Naive thymus-derived CD4-positive, alpha-beta T cell (primary cell): ENCODE measurements at regions of chr7 and their contacts with region 1.

Region 1: GRCh38 chr7:131188367-131189339 is 139.0 kb upstream of the MKLN1 start:
- DNase-seq: peak; percentile 5 to 62 (median 29)
- ATAC-seq: peak; percentile 95
- H3K4me3 ChIP-seq: no peak overlapping the region
- H3K4me3 Mint-ChIP-seq: peak overlapping the region in 2 of 10 donors; percentile 27 to 56
- H3K27ac ChIP-seq: no peak overlapping the region
- H3K27ac Mint-ChIP-seq: peak overlapping the region in 4 of 9 donors; percentile 15 to 86 (median 52)
- H3K4me1 ChIP-seq: peaks cover 15 to 28% of the 10 kb centered on the region in 2 donors
- H3K4me1 Mint-ChIP-seq: peaks cover 5 to 51% (median 16%) of the 10 kb centered on the region in 7 donors
- H3K27me3 ChIP-seq: no peaks in the 10 kb centered on the region
- H3K27me3 Mint-ChIP-seq: no peaks in the 10 kb centered on the region

Region 2: DNA sequence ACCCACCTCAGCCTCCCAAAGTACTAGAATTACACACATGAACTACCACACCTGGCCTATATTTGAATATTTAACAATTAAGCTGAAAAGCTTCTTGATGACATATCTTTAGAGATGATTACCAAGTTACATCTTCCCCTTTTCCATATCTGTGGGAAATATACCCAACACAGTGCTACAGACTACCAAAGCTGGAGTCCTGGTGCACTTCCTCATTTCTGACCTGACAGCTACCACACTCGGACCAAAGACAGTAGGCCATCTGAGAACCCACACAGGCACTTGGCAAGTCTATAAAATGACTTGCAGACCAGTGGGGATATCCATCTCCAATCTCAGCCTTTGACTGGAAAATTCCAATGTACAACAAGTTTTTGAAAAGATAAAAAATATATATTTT is 184.3 kb before region 1 on chr7:
- CTCF ChIA-PET with region 1: no interaction called
- POLR2A ChIA-PET with region 1: no interaction called
- intact Hi-C with region 1: no loop called
- DNase-seq: no peak
- ATAC-seq: peak; percentile 46
- H3K4me3 ChIP-seq: no peak overlapping the region
- H3K4me3 Mint-ChIP-seq: peak overlapping the region in 2 of 10 donors; percentile 12 to 32
- H3K27ac ChIP-seq: no peak overlapping the region
- H3K27ac Mint-ChIP-seq: peak overlapping the region in 3 of 9 donors; percentile 23 to 42 (median 27)
- H3K4me1 ChIP-seq: peaks cover 37 to 45% of the 10 kb centered on the region in 2 donors
- H3K4me1 Mint-ChIP-seq: peaks cover 37 to 89% (median 78%) of the 10 kb centered on the region in 7 donors
- H3K27me3 ChIP-seq: no peaks in the 10 kb centered on the region
- H3K27me3 Mint-ChIP-seq: no peaks in the 10 kb centered on the region

Region 3: GRCh38 chr7:131057015-131057793 is 131.4 kb before region 1 on chr7:
- CTCF ChIA-PET with region 1: no interaction called
- POLR2A ChIA-PET with region 1: no interaction called
- intact Hi-C with region 1: loop called in 1 of 2 experiments (anchors 2 kb)
- DNase-seq: peak in 7 of 9 donors; percentile 56 to 82 (median 76)
- ATAC-seq: peak; percentile 67
- H3K4me3 ChIP-seq: peak overlapping the region; percentile 11
- H3K4me3 Mint-ChIP-seq: peak overlapping the region; percentile 72 to 93 (median 82)
- H3K27ac ChIP-seq: peak overlapping the region; percentile 76
- H3K27ac Mint-ChIP-seq: peak overlapping the region; percentile 94 to 100 (median 98)
- H3K4me1 ChIP-seq: peaks cover 69 to 77% of the 10 kb centered on the region in 2 donors
- H3K4me1 Mint-ChIP-seq: peaks cover 54 to 87% (median 72%) of the 10 kb centered on the region in 7 donors
- H3K27me3 ChIP-seq: no peaks in the 10 kb centered on the region
- H3K27me3 Mint-ChIP-seq: no peaks in the 10 kb centered on the region

Region 4: DNA sequence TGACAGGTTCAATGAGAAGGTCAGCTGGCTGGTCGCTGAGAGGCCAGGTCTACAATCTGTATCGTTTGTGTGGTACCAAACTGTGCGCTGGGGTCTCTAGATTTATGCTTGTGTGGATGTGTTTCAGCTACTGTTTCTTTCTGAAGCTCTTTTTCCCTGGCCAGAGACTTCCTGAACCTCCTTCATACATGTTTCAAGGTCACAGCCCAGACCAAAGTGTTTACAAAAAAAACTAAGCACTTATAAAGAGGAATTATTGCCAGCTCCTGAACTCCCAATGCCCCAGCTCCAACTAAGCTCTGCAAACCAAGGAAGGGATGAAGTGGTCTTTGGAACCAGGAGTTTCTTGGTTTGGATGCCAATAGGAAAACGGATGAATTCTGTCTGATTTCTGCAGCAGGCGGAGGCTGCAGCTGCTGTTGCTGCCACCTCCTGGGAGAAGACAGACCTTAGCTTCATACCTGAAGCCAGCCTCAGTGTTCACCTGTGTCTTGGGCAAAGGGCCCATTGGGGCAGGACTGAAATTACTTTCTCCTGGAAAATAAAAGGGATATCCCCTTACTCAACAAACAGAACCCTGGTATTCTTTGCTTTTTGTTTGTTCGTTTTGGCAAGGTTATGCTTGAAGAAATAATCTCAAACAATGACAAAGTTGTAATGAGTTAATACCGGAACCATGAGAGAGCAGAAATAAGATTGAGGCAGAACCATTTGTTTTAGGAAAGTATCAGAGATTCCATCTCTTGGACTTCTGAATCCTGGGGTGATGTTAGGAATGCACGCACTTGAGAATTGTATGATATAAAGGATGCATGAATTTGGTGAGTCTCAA is 114.4 kb after region 1 on chr7:
- CTCF ChIA-PET with region 1: no interaction called
- POLR2A ChIA-PET with region 1: no interaction called
- intact Hi-C with region 1: loop called in 1 of 2 experiments (anchors 2 kb)
- DNase-seq: peak in 6 of 9 donors; percentile 16 to 34 (median 24)
- ATAC-seq: peak; percentile 45
- H3K4me3 ChIP-seq: no peak overlapping the region
- H3K4me3 Mint-ChIP-seq: no peak overlapping the region
- H3K27ac ChIP-seq: no peak overlapping the region
- H3K27ac Mint-ChIP-seq: peak overlapping the region in 1 of 9 donors; percentile 68
- H3K4me1 ChIP-seq: no peaks in the 10 kb centered on the region
- H3K4me1 Mint-ChIP-seq: no peaks in the 10 kb centered on the region
- H3K27me3 ChIP-seq: no peaks in the 10 kb centered on the region
- H3K27me3 Mint-ChIP-seq: peaks cover 0 to 4% (median 0%) of the 10 kb centered on the region in 5 donors

Region 5: GRCh38 chr7:131327626-131328376 is 139.1 kb after region 1 on chr7 and contains the start of gene MKLN1:
- CTCF ChIA-PET with region 1: no interaction called
- POLR2A ChIA-PET with region 1: no interaction called
- intact Hi-C with region 1: loop called in 1 of 2 experiments (anchors 2 kb)
- DNase-seq: peak; percentile 82 to 91 (median 86)
- ATAC-seq: peak; percentile 99
- H3K4me3 ChIP-seq: peak within 1 kb of the TSS; percentile 88
- H3K4me3 Mint-ChIP-seq: peak within 1 kb of the TSS; percentile 88 to 100 (median 94)
- H3K27ac ChIP-seq: peak within 1 kb of the TSS; percentile 94
- H3K27ac Mint-ChIP-seq: peak within 1 kb of the TSS; percentile 86 to 99 (median 97)
- H3K4me1 ChIP-seq: peaks cover 26 to 43% of the 10 kb centered on the region in 2 donors
- H3K4me1 Mint-ChIP-seq: peaks cover 35 to 85% (median 71%) of the 10 kb centered on the region in 7 donors
- H3K27me3 ChIP-seq: no peaks in the 10 kb centered on the region
- H3K27me3 Mint-ChIP-seq: no peaks in the 10 kb centered on the region
- total RNA-seq, gene MKLN1: 42.0 to 69.8 (median 59.3) TPM

Region 6: DNA sequence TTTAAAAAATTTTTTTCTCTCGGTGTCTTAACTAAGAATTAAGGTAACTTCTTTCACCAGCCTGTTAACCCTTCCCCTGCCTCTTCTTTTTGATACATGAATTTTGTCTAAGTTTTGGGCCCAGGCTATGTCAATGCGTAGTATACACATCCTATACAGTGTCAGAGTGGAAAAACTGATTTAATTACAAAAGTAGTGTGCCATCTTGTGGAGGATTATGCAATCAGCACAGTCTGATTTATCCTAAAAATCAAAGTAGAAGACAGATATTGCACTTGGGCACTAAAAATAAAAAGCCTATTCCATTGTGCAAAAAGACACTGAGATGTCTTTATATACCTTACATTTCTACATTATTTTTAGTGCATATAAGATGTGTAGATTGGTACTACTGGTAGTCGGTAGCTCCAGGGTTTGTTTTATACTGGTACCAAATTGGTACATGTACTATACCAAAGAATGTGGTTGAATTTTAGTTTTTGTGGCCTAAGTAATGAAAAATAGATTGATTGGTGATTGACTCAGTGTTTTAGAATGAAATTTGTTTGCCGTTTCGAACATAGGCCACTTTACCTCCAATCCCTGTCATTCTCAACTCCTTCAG is 235.7 kb after region 1 on chr7:
- CTCF ChIA-PET with region 1: no interaction called
- POLR2A ChIA-PET with region 1: no interaction called
- intact Hi-C with region 1: loop called in 1 of 2 experiments (anchors 10 kb)
- DNase-seq: peak in 7 of 9 donors; percentile 18 to 50 (median 44)
- ATAC-seq: peak; percentile 90
- H3K4me3 ChIP-seq: no peak overlapping the region
- H3K4me3 Mint-ChIP-seq: no peak overlapping the region
- H3K27ac ChIP-seq: no peak overlapping the region
- H3K27ac Mint-ChIP-seq: peak overlapping the region in 2 of 9 donors; percentile 11
- H3K4me1 ChIP-seq: no peaks in the 10 kb centered on the region
- H3K4me1 Mint-ChIP-seq: peaks cover 0 to 20% (median 13%) of the 10 kb centered on the region in 7 donors
- H3K27me3 ChIP-seq: no peaks in the 10 kb centered on the region
- H3K27me3 Mint-ChIP-seq: no peaks in the 10 kb centered on the region